K562 (cell line): ENCODE measurements at regions of chr6 and their contacts with region 1.

Region 1: GRCh38 chr6:166751051-166751595 is 124.1 kb upstream of the RPS6KA2 start:
- DNase-seq: peak in 1 of 4 experiments; percentile 24
- ATAC-seq: peak; percentile 53; the same call in 2 of the 3 replicates
- H3K4me3 ChIP-seq: no peak overlapping the region
- H3K27ac ChIP-seq: no peak overlapping the region
- H3K4me1 ChIP-seq: peaks cover 0 to 4% of the 10 kb centered on the region in 2 experiments; a peak in 1 of 5 replicates
- H3K27me3 ChIP-seq: peaks cover 40 to 70% of the 10 kb centered on the region in 2 experiments
- CTCF ChIP-seq: no peak
- EP300 ChIP-seq: no peak
- POLR2A ChIP-seq: no peak
- RAD21 ChIP-seq: no peak

Region 2: DNA sequence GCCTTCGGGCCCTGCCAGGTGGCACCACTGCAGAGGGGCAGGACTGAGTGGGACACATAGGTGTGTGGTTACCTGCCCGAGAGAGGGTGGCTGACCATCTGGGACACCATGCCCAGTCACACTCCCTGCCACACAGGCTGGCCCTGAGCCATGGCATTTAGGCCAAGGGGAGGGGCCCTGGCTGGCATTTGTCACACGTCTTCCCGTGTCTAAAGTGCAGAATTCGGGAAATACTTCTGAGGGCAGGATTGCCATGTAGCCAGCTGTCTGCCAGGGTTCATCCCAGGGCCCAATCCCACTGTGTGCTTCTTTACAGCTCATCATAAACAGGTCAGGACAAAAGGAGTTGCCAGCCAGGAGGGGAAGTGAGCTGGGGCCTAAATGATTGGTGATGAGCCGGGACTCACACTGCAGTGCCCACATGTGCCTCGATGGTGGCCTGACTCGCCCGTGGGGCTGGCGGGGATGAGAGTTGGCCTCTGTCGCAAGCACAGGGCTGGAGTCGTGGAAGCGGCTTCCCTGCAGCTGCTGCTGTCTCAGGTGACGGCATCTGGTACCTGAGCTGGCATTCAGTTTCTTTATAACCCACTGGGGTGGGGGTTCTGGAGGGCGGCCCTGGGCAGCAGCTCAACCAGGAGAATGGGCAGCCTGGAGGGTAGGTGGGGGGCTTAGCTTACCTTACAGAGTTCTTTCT is 534.1 kb after region 1 on chr6:
- CTCF ChIA-PET with region 1: no interaction called
- POLR2A ChIA-PET with region 1: no interaction called
- in situ Hi-C with region 1: loop called (anchors 25 kb)
- intact Hi-C with region 1: no loop called
- DNase-seq: no peak
- ATAC-seq: no peak
- H3K4me3 ChIP-seq: no peak overlapping the region
- H3K27ac ChIP-seq: no peak overlapping the region
- H3K4me1 ChIP-seq: no peaks in the 10 kb centered on the region
- H3K27me3 ChIP-seq: peaks cover 11 to 39% of the 10 kb centered on the region in 2 experiments; a peak in 4 of 5 replicates
- CTCF ChIP-seq: no peak
- EP300 ChIP-seq: no peak
- POLR2A ChIP-seq: no peak
- RAD21 ChIP-seq: no peak

Region 3: GRCh38 chr6:168636147-168637004 is 1885.3 kb after region 1 on chr6:
- CTCF ChIA-PET with region 1: no interaction called
- POLR2A ChIA-PET with region 1: no interaction called
- in situ Hi-C with region 1: loop called (anchors 10 kb)
- intact Hi-C with region 1: no loop called
- DNase-seq: no peak
- ATAC-seq: no peak
- H3K4me3 ChIP-seq: no peak overlapping the region
- H3K27ac ChIP-seq: no peak overlapping the region
- H3K4me1 ChIP-seq: no peaks in the 10 kb centered on the region
- H3K27me3 ChIP-seq: peaks cover 0 to 15% of the 10 kb centered on the region in 2 experiments; a peak in 3 of 5 replicates
- CTCF ChIP-seq: no peak
- EP300 ChIP-seq: no peak
- POLR2A ChIP-seq: no peak
- RAD21 ChIP-seq: no peak